Cardiac septum (tissue), 1 donor: ENCODE measurements at regions of chr16 and their contacts with region 1.

Region 1: GRCh38 chr16:15498427-15499175 is 64.2 kb downstream of the BMERB1 start:
- DNase-seq: no peak

Region 2: GRCh38 chr16:15440852-15441251 is 57.7 kb before region 1 on chr16:
- intact Hi-C with region 1: loop called (anchors 5 kb)
- DNase-seq: no peak